Activated CD4-positive, alpha-beta memory T cell treated with anti-CD3 and anti-CD28 coated beads for 36 hours (primary cell): ENCODE measurements at regions of chr11 and their contacts with region 1.

Region 1: GRCh38 chr11:85664615-85665481 is at the start of gene CREBZF:
- DNase-seq: peak; percentile 97
- H3K4me3 Mint-ChIP-seq: peak within 1 kb of the TSS; percentile 99
- H3K27ac Mint-ChIP-seq: peak within 1 kb of the TSS; percentile 99
- H3K4me1 Mint-ChIP-seq: peaks cover 28% of the 10 kb centered on the region
- H3K27me3 Mint-ChIP-seq: no peaks in the 10 kb centered on the region
- total RNA-seq, gene CREBZF: 40.8 to 45.2 TPM

Region 2: GRCh38 chr11:85595285-85595884 is 69.5 kb before region 1 on chr11:
- CTCF ChIA-PET with region 1: interaction called, 7 read pairs
- POLR2A ChIA-PET with region 1: no interaction called
- intact Hi-C with region 1: loop called (anchors 2 kb)
- DNase-seq: no peak
- H3K4me3 Mint-ChIP-seq: no peak overlapping the region
- H3K27ac Mint-ChIP-seq: no peak overlapping the region
- H3K4me1 Mint-ChIP-seq: no peaks in the 10 kb centered on the region
- H3K27me3 Mint-ChIP-seq: no peaks in the 10 kb centered on the region

Region 3: GRCh38 chr11:85647604-85648299 is 17.1 kb before region 1 on chr11 and contains the start of gene TMEM126A:
- CTCF ChIA-PET with region 1: interaction called, 13 read pairs
- POLR2A ChIA-PET with region 1: interaction called, 38 read pairs
- intact Hi-C with region 1: loop called (anchors 1 kb)
- DNase-seq: peak; percentile 96
- H3K4me3 Mint-ChIP-seq: peak within 1 kb of the TSS; percentile 94
- H3K27ac Mint-ChIP-seq: peak within 1 kb of the TSS; percentile 86
- H3K4me1 Mint-ChIP-seq: peaks cover 26% of the 10 kb centered on the region
- H3K27me3 Mint-ChIP-seq: peaks cover 11% of the 10 kb centered on the region
- total RNA-seq, gene TMEM126A: 45.3 to 49.4 TPM

Region 4: GRCh38 chr11:85752890-85753581 is 88.2 kb after region 1 on chr11:
- CTCF ChIA-PET with region 1: no interaction called
- POLR2A ChIA-PET with region 1: interaction called, 4 read pairs
- intact Hi-C with region 1: loop called (anchors 1 kb)
- DNase-seq: peak; percentile 94
- H3K4me3 Mint-ChIP-seq: peak overlapping the region; percentile 70
- H3K27ac Mint-ChIP-seq: peak overlapping the region; percentile 96
- H3K4me1 Mint-ChIP-seq: peaks cover 95% of the 10 kb centered on the region
- H3K27me3 Mint-ChIP-seq: peaks cover 3% of the 10 kb centered on the region

Region 5: GRCh38 chr11:86068951-86069407 is 404.1 kb after region 1 on chr11 and contains the start of gene PICALM:
- CTCF ChIA-PET with region 1: no interaction called
- POLR2A ChIA-PET with region 1: interaction called, 3 read pairs
- intact Hi-C with region 1: loop called (anchors 1 kb)
- DNase-seq: peak; percentile 99
- H3K4me3 Mint-ChIP-seq: peak within 1 kb of the TSS; percentile 96
- H3K27ac Mint-ChIP-seq: peak within 1 kb of the TSS; percentile 88
- H3K4me1 Mint-ChIP-seq: peaks cover 25% of the 10 kb centered on the region
- H3K27me3 Mint-ChIP-seq: no peaks in the 10 kb centered on the region
- total RNA-seq, gene PICALM: 75.9 to 90.4 TPM

Region 6: GRCh38 chr11:86302100-86302793 is 637.4 kb after region 1 on chr11 and contains the start of gene HIKESHI:
- CTCF ChIA-PET with region 1: no interaction called
- POLR2A ChIA-PET with region 1: no interaction called
- intact Hi-C with region 1: loop called (anchors 5 kb)
- DNase-seq: peak; percentile 95
- H3K4me3 Mint-ChIP-seq: peak within 1 kb of the TSS; percentile 100
- H3K27ac Mint-ChIP-seq: peak within 1 kb of the TSS; percentile 93
- H3K4me1 Mint-ChIP-seq: peaks cover 23% of the 10 kb centered on the region
- H3K27me3 Mint-ChIP-seq: no peaks in the 10 kb centered on the region
- total RNA-seq, gene HIKESHI: 53.1 to 55.1 TPM